Activated B cell treated with CpG ODN at 0.5 μM for 24 hours (primary cell): ENCODE measurements at regions of chr7 and their contacts with region 1.

Region 1: DNA sequence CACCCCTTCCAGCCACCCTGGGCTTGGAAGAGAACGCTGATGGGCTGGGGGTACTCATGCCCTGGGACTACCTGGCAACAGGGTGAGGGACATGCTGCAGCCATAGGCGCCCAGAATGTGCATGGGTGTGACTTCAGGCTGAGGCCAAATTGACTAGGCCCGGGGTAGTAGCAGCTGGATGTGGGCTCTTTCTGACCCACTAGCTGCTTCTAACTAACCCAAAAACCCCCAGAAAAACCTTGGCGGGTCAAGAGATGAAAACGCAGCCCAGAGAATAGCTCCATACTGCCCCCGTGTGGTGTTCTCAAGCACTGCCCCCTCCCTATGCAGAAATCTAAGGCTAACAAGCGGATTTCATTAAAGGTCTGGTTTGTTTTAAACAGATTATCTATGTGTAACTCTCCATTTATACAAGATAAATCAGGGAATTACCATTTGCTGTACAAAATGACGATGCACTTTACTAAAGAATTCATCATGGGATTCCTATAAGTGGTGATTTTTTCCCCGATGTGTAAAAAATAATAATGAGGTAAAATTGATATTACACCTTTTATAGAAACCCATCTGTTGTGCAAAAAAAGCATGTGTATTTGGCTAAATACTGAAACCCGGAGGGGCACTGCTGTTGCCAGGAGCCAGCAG is 4.2 kb downstream of the SMARCD3 start:
- DNase-seq: no peak
- ATAC-seq: peak; percentile 15
- H3K4me3 Mint-ChIP-seq: peak overlapping the region; percentile 69
- H3K27ac Mint-ChIP-seq: peak overlapping the region; percentile 53
- H3K4me1 Mint-ChIP-seq: peaks cover 47% of the 10 kb centered on the region
- H3K27me3 Mint-ChIP-seq: peaks cover 20% of the 10 kb centered on the region
- CTCF ChIP-seq: no peak

Region 2: GRCh38 chr7:151123822-151124464 is 120.4 kb before region 1 on chr7:
- CTCF ChIA-PET with region 1: interaction called, 4 read pairs
- POLR2A ChIA-PET with region 1: no interaction called
- intact Hi-C with region 1: loop called (anchors 1 kb)
- DNase-seq: peak; percentile 67
- ATAC-seq: peak; percentile 98
- H3K4me3 Mint-ChIP-seq: no peak overlapping the region
- H3K27ac Mint-ChIP-seq: no peak overlapping the region
- H3K4me1 Mint-ChIP-seq: peaks cover 3% of the 10 kb centered on the region
- H3K27me3 Mint-ChIP-seq: peaks cover 4% of the 10 kb centered on the region
- CTCF ChIP-seq: peak; percentile 17

Region 3: GRCh38 chr7:151172273-151173141 is 71.8 kb before region 1 on chr7:
- CTCF ChIA-PET with region 1: interaction called, 3 read pairs
- POLR2A ChIA-PET with region 1: no interaction called
- intact Hi-C with region 1: loop called (anchors 2 kb)
- DNase-seq: peak; percentile 72
- ATAC-seq: peak; percentile 86
- H3K4me3 Mint-ChIP-seq: no peak overlapping the region
- H3K27ac Mint-ChIP-seq: no peak overlapping the region
- H3K4me1 Mint-ChIP-seq: peaks cover 6% of the 10 kb centered on the region
- H3K27me3 Mint-ChIP-seq: peaks cover 56% of the 10 kb centered on the region
- CTCF ChIP-seq: peak; percentile 100

Region 4: GRCh38 chr7:151226875-151227782 is 17.2 kb before region 1 on chr7 and contains the start of gene ABCF2:
- CTCF ChIA-PET with region 1: interaction called, 11 read pairs
- POLR2A ChIA-PET with region 1: interaction called, 23 read pairs
- intact Hi-C with region 1: loop called (anchors 1 kb)
- DNase-seq: peak; percentile 97
- ATAC-seq: peak; percentile 99
- H3K4me3 Mint-ChIP-seq: peak within 1 kb of the TSS; percentile 99
- H3K27ac Mint-ChIP-seq: peak within 1 kb of the TSS; percentile 91
- H3K4me1 Mint-ChIP-seq: peaks cover 41% of the 10 kb centered on the region
- H3K27me3 Mint-ChIP-seq: no peaks in the 10 kb centered on the region
- CTCF ChIP-seq: no peak
- total RNA-seq, gene ABCF2: 47.3 and 52.4 TPM in 2 replicates

Region 5: GRCh38 chr7:151232091-151232916 is 12.0 kb before region 1 on chr7 and contains the start of gene CHPF2:
- CTCF ChIA-PET with region 1: interaction called, 11 read pairs
- POLR2A ChIA-PET with region 1: interaction called, 23 read pairs
- intact Hi-C with region 1: loop called (anchors 1 kb)
- DNase-seq: peak; percentile 85
- ATAC-seq: peak; percentile 93
- H3K4me3 Mint-ChIP-seq: peak within 1 kb of the TSS; percentile 99
- H3K27ac Mint-ChIP-seq: peak within 1 kb of the TSS; percentile 96
- H3K4me1 Mint-ChIP-seq: peaks cover 35% of the 10 kb centered on the region
- H3K27me3 Mint-ChIP-seq: no peaks in the 10 kb centered on the region
- CTCF ChIP-seq: no peak
- total RNA-seq, gene CHPF2: 32.4 and 41.2 TPM in 2 replicates

Region 6: GRCh38 chr7:151304856-151305255 is 60.5 kb after region 1 on chr7:
- CTCF ChIA-PET with region 1: no interaction called
- POLR2A ChIA-PET with region 1: interaction called, 20 read pairs
- intact Hi-C with region 1: loop called (anchors 1 kb)
- DNase-seq: no peak
- ATAC-seq: no peak
- H3K4me3 Mint-ChIP-seq: no peak overlapping the region
- H3K27ac Mint-ChIP-seq: no peak overlapping the region
- H3K4me1 Mint-ChIP-seq: peaks cover 5% of the 10 kb centered on the region
- H3K27me3 Mint-ChIP-seq: peaks cover 34% of the 10 kb centered on the region
- CTCF ChIP-seq: no peak

Region 7: GRCh38 chr7:151315038-151315655 is 70.8 kb after region 1 on chr7:
- CTCF ChIA-PET with region 1: no interaction called
- POLR2A ChIA-PET with region 1: interaction called, 20 read pairs
- intact Hi-C with region 1: no loop called
- DNase-seq: peak; percentile 41
- ATAC-seq: peak; percentile 87
- H3K4me3 Mint-ChIP-seq: no peak overlapping the region
- H3K27ac Mint-ChIP-seq: no peak overlapping the region
- H3K4me1 Mint-ChIP-seq: peaks cover 2% of the 10 kb centered on the region
- H3K27me3 Mint-ChIP-seq: no peaks in the 10 kb centered on the region
- CTCF ChIP-seq: no peak

Region 8: DNA sequence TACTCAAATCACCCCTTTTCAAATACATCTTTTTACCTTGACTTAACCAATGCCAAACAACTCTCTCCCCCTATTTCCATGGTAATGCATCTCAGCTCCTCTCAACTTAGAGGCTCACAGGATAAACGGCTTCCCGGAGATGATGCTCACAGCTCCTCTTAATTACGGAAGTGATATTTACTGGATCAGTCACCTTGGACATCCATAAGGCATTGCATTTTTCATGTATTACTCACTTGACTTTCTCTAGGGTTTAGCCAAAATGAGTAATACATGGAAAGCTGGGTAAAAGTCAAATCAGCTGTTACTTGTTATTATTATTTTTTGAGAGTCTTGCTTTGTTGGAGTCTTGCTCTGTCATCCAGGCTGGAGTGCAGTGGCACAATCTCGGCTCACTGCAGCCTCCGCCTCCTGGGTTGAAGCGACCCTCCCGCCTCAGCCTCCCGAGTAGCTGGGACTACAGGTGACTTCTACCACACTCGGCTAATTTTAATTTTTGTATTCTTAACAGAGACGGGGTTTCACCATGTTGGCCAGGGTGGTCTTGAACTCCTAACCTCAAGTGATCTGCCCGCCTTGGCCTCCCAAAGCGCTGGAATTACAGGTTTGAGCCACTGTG is 348.7 kb after region 1 on chr7:
- CTCF ChIA-PET with region 1: no interaction called
- POLR2A ChIA-PET with region 1: no interaction called
- intact Hi-C with region 1: no loop called
- DNase-seq: no peak
- ATAC-seq: no peak
- H3K4me3 Mint-ChIP-seq: no peak overlapping the region
- H3K27ac Mint-ChIP-seq: no peak overlapping the region
- H3K4me1 Mint-ChIP-seq: peaks cover 18% of the 10 kb centered on the region
- H3K27me3 Mint-ChIP-seq: no peaks in the 10 kb centered on the region
- CTCF ChIP-seq: no peak

Region 9: GRCh38 chr7:151648429-151648828 is 404.1 kb after region 1 on chr7:
- CTCF ChIA-PET with region 1: no interaction called
- POLR2A ChIA-PET with region 1: no interaction called
- intact Hi-C with region 1: no loop called
- DNase-seq: no peak
- ATAC-seq: no peak
- H3K4me3 Mint-ChIP-seq: no peak overlapping the region
- H3K27ac Mint-ChIP-seq: no peak overlapping the region
- H3K4me1 Mint-ChIP-seq: no peaks in the 10 kb centered on the region
- H3K27me3 Mint-ChIP-seq: no peaks in the 10 kb centered on the region
- CTCF ChIP-seq: no peak